BJ (cell line): ENCODE measurements at regions of chr2 and their contacts with region 1.

Region 1: DNA sequence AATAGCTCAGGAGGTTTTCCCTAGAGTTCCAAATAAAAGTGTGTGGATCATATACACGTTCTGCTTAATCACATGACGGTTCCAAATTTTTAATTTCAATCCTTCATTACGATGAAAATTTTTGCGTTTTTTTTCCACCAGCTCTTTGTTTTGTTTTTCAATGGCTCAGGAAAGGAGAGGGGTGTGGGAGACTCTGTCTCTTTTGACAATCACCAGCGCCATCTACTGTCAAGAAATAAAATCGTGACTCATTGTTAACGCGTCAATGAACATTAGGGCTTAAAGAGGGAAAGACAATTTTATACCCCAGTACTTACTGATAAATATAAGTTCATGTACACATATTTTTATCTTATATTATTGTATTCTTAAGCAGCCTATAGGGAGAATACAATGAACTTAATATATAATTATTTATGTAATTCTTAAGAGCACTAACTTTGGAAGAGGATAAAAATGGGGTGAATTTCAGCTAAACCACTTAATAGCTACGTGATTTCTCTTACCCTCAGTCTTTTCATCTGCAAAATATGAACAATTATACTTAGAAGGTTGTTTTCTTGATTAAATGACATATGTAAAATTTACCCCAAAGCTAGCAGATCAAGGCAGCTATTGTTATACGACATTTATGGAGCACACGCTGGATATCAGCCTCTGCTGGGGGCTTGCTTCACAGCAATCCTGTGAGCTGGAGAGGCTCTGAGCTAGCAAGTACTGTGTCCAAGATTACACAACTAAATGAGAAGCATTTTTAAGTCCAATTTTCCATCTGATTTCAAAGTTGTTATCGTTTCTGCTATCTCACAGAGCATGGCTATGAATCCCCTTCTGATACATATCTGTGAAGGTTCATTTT is 47.4 kb upstream of the RMDN2 start:
- DNase-seq: no peak
- H3K4me3 ChIP-seq: no peak overlapping the region
- H3K27me3 ChIP-seq: peaks cover 4% of the 10 kb centered on the region
- CTCF ChIP-seq: peak; percentile 57

Region 2: DNA sequence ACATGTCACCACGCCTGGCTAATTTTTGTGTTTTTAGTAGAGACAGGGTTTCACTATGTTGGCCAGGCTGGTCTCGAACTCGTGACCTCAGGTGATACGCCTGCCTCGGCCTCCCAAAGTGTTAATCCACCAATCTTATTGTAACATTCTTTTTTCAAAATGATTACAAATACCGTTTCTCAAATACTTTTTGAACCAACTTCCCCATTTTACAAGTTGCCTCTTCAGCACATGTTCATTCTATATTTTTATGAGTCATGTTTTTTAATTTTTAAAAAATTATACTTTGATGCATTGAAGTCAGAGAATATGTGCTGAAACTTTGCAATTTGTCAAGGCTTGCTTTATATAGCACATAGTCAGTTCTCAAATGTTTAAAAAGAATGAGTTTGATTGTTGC is 475.1 kb before region 1 on chr2:
- CTCF ChIA-PET with region 1: interaction called, 59 read pairs
- POLR2A ChIA-PET with region 1: no interaction called
- DNase-seq: no peak
- H3K4me3 ChIP-seq: no peak overlapping the region
- H3K27me3 ChIP-seq: no peaks in the 10 kb centered on the region
- CTCF ChIP-seq: no peak

Region 3: DNA sequence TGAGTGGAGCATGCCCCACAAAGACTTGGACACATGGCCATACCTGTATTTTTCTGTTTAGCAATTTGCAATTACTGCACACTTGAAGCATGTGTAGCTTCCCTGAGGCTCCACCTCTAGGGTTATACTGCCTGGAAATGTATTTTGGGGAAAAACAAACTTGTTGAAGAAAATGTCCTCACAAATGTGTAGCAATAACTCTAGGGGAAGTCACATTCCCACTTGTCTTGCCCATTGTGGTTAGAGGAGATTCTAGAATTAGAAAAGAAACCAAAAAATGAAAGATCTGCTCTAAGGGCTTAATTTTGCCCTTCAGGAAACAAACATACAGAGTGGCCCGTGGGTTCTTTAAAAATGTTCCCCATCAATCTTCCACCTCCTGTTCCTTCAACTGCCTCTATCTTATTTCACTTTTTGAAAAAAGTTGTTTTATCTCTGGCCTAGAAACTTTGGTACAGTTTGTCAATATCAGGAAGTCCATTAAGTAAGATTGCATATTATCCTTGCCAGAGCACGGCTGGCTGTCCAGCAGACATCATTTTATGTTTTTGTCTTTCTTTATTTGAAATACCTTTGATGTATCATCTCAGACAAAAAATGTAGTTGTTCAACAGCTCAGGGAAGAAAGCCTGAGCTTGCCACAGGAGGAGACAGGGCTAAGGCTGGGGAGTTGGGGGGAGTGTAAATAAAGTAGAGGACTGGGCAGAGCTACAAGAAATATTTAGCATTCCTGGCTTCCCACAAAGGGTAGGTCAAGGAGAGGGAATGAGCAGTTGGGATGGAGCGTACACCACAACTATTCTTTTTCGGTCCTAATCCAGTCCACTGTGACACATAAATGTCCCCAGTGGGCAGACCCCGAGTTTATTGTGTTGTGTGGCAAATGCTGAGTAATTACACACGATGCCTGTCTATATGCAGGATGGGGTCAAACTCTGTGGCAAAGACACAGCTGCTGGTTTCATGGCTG is 109.4 kb before region 1 on chr2:
- CTCF ChIA-PET with region 1: interaction called, 12 read pairs
- POLR2A ChIA-PET with region 1: no interaction called
- DNase-seq: peak; percentile 96
- H3K4me3 ChIP-seq: no peak overlapping the region
- H3K27me3 ChIP-seq: no peaks in the 10 kb centered on the region
- CTCF ChIP-seq: no peak

Region 4: DNA sequence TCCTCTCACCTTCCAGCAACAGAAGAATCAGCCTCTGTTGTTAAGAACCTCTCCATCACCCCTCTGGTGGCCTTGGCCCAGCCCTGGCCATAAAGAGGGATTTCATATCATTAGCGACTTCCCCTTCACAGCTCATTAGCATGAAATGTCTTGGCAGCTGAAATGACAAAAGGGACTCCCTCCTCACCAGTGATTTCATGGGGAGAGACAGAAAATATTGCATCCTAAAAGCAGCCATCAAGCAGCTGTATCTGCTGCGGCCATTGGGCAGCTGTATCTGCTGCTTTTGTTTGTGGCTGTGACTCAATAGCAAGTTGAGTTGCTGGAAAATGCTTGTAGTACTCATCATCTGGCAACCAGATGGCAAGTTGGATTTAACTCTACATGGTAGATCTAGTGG is 58.5 kb before region 1 on chr2:
- CTCF ChIA-PET with region 1: interaction called, 16 read pairs
- POLR2A ChIA-PET with region 1: no interaction called
- DNase-seq: peak; percentile 82
- H3K4me3 ChIP-seq: no peak overlapping the region
- H3K27me3 ChIP-seq: no peaks in the 10 kb centered on the region
- CTCF ChIP-seq: no peak

Region 5: GRCh38 chr2:37837628-37838328 is 39.9 kb before region 1 on chr2:
- CTCF ChIA-PET with region 1: interaction called, 32 read pairs
- POLR2A ChIA-PET with region 1: no interaction called
- DNase-seq: no peak
- H3K4me3 ChIP-seq: no peak overlapping the region
- H3K27me3 ChIP-seq: no peaks in the 10 kb centered on the region
- CTCF ChIP-seq: no peak

Region 6: GRCh38 chr2:38030635-38031355 is 153.1 kb after region 1 on chr2:
- CTCF ChIA-PET with region 1: no interaction called
- POLR2A ChIA-PET with region 1: no interaction called
- DNase-seq: no peak
- H3K4me3 ChIP-seq: no peak overlapping the region
- H3K27me3 ChIP-seq: peaks cover 9% of the 10 kb centered on the region
- CTCF ChIP-seq: no peak